HEK293 (cell line): ENCODE measurements at regions of chr1 and their contacts with region 1.

Region 1: DNA sequence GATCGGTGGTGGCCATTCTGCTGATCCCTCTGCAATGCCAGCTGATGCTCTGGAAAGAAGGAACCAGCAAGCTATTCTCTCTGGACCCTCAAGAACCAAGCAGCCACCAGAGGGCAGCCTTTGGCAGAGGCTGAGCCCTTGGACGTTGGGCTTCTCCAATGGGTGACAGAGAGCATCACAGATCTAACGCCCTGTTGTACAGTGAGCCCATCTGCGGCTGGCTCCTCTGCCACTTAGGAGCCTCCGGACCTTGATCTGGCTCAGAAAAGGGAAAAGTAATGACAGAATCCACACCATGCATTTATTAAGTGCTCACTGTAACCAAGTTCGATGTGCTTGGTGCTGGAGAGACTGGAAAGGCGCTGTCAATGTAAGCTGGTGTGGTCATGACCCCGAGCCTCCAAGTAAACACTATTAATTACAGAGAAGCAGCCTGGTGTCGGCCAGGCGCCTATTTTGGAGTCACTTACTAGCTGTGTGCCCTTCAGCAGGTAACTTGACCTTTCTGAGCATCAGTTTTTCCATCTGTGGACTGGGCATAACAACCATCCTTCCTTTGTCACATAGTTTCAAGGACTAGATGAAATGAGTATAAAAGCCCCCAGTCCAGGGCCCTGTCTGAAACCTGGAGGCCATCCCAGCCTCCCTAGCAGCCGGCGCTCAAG is 34.9 kb downstream of the ECE1 start:
- H3K4me3 ChIP-seq: no peak overlapping the region
- H3K27ac ChIP-seq: no peak overlapping the region
- H3K4me1 ChIP-seq: no peaks in the 10 kb centered on the region
- CTCF ChIP-seq: peak; percentile 80

Region 2: GRCh38 chr1:20727384-20728316 is 527.8 kb before region 1 on chr1:
- CTCF ChIA-PET with region 1: no interaction called
- POLR2A ChIA-PET with region 1: no interaction called
- H3K4me3 ChIP-seq: no peak overlapping the region
- H3K27ac ChIP-seq: no peak overlapping the region
- H3K4me1 ChIP-seq: peaks cover 4% of the 10 kb centered on the region
- CTCF ChIP-seq: no peak

Region 3: DNA sequence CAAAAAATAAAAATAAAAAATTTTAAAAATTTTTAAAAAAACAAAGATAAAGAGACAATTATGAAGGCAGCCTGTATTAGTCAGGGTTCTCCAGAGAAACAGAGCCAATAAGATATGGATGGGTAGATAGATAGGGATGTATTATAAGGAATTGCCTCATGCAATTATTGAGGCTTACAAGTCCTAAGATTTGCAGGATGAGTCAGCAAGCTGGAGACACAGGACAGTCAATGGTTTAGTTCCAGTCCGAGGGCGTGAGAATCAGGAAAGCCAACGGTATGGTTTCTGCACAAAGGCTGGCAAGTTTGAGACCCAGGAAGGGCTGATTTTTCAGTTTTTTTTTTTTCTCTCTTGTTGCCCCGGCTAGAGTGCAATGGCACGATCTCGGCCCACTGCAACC is 54.6 kb before region 1 on chr1:
- CTCF ChIA-PET with region 1: no interaction called
- POLR2A ChIA-PET with region 1: no interaction called
- H3K4me3 ChIP-seq: no peak overlapping the region
- H3K27ac ChIP-seq: no peak overlapping the region
- H3K4me1 ChIP-seq: no peaks in the 10 kb centered on the region
- CTCF ChIP-seq: no peak

Region 4: GRCh38 chr1:21238141-21238800 is 17.1 kb before region 1 on chr1:
- CTCF ChIA-PET with region 1: interaction called, 54 read pairs
- POLR2A ChIA-PET with region 1: no interaction called
- H3K4me3 ChIP-seq: no peak overlapping the region
- H3K27ac ChIP-seq: no peak overlapping the region
- H3K4me1 ChIP-seq: no peaks in the 10 kb centered on the region
- CTCF ChIP-seq: no peak

Region 5: GRCh38 chr1:21244986-21245687 is 10.3 kb before region 1 on chr1:
- CTCF ChIA-PET with region 1: interaction called, 14 read pairs
- POLR2A ChIA-PET with region 1: no interaction called
- H3K4me3 ChIP-seq: no peak overlapping the region
- H3K27ac ChIP-seq: no peak overlapping the region
- H3K4me1 ChIP-seq: no peaks in the 10 kb centered on the region
- CTCF ChIP-seq: no peak

Region 6: GRCh38 chr1:21334214-21335087 is 79.0 kb after region 1 on chr1:
- CTCF ChIA-PET with region 1: interaction called, 25 read pairs
- POLR2A ChIA-PET with region 1: interaction called, 9 read pairs
- H3K4me3 ChIP-seq: no peak overlapping the region
- H3K27ac ChIP-seq: peak overlapping the region; percentile 48; the same call in 1 of the 2 replicates
- H3K4me1 ChIP-seq: peaks cover 38% of the 10 kb centered on the region
- CTCF ChIP-seq: peak; percentile 92